CD4-positive, alpha-beta memory T cell (primary cell): ENCODE measurements at regions of chr1 and their contacts with region 1.

Region 1: DNA sequence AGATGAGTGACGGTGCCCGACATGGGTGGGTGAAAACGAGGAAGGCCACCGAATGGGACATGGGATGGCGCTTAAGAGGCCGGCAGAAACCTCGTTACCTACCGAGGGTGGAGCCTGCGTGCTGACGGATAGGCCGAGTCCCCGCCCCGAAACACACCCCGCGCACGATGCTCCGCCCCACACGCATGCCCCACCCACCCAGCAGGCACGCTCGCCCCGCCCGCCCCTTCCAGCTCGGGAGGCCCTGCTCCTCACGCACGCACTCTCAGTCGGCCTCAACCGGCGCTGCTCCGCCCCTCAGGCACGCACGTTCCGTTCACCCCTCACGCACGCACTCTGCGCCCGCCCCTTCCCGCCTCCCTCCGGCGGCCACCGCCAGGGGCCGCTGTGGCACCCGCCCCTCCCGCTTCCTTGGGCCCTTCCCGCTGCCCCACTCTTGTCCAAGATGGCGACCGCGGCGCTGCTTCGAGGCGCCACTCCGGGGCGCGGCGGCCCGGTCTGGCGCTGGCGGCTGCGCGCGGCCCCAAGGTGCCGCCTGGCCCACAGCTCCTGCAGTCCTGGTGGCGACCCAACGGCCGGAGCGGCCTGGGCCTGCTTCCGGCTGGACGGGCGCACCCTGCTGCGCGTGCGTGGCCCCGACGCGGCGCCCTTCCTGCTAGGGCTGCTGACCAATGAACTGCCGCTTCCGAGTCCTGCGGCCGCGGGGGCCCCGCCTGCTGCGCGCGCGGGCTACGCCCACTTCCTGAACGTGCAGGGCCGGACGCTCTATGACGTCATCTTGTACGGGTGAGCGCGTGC is at the start of gene IBA57:
- DNase-seq: peak; percentile 99 to 100 (median 100)
- H3K4me3 ChIP-seq: peak within 1 kb of the TSS; percentile 73 to 76
- H3K4me3 Mint-ChIP-seq: peak within 1 kb of the TSS; percentile 90 to 98 (median 92)
- H3K27ac ChIP-seq: peak within 1 kb of the TSS; percentile 96
- H3K27ac Mint-ChIP-seq: peak within 1 kb of the TSS; percentile 96 to 99 (median 98)
- H3K4me1 ChIP-seq: peaks cover 38% of the 10 kb centered on the region
- H3K4me1 Mint-ChIP-seq: peaks cover 22 to 70% (median 44%) of the 10 kb centered on the region in 4 donors
- H3K27me3 ChIP-seq: no peaks in the 10 kb centered on the region
- H3K27me3 Mint-ChIP-seq: no peaks in the 10 kb centered on the region
- total RNA-seq, gene IBA57: 10.9 to 12.0 TPM

Region 2: DNA sequence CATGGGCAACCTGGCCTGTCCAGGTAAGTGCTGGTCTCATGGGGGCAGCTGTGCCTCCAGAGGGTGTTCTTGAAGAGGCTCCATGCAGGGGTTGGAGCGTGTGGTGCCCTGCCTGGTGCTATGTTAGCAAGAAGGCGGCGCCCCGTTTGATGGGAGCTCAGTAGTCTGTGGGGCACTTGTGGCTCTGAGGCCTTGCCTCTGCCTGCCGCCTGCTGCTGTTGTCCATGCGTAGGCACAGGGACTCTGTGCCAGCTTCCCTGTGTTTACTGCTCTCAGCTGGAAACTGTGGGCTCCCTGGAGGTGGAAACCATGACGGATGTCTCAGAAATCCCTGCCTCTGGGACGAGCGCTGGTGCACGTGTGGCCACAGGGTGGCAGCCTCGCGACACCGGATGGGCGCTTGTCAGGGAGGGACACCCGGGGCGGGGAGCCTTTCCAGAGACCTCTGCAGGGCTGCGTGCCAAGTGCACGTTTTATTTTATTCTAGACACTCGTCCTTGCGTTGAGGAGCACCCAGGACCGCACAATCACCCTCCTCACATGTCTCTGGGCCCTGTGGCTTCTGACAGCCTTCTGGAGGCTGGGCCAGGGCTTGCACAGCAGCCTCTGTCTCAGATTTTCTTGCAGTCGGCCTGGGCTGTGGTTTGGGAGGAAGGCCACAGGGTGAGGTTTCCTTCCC is 403.2 kb before region 1 on chr1:
- CTCF ChIA-PET with region 1: no interaction called
- POLR2A ChIA-PET with region 1: interaction called, 3 read pairs
- intact Hi-C with region 1: loop called (anchors 10 kb)
- DNase-seq: peak; percentile 87 to 92 (median 88)
- H3K4me3 ChIP-seq: peak overlapping the region; percentile 20 to 41
- H3K4me3 Mint-ChIP-seq: peak overlapping the region; percentile 60 to 89 (median 76)
- H3K27ac ChIP-seq: peak overlapping the region; percentile 46
- H3K27ac Mint-ChIP-seq: peak overlapping the region; percentile 89 to 95 (median 92)
- H3K4me1 ChIP-seq: peaks cover 89% of the 10 kb centered on the region
- H3K4me1 Mint-ChIP-seq: peaks cover 66 to 97% (median 77%) of the 10 kb centered on the region in 4 donors
- H3K27me3 ChIP-seq: no peaks in the 10 kb centered on the region
- H3K27me3 Mint-ChIP-seq: no peaks in the 10 kb centered on the region

Region 3: DNA sequence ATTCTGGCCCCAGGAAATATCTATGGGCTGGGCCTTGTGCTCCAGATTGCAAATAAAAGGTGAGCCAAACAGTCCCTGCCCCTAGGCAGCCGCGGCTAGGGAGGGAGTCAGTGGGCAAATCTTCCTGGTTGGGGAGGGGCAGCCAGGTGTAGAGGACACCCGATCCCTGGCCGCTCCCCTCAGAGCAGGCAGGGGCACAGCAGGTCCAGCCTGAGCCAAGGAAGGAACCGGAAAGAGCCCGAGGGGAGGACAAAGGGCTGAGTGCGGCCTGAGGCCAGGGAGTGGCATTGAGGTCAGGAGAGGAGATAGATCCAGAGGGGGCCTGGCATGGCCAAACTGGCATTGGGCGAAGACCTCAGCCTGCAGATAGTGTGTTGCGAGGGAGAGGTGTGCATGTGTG is 119.7 kb before region 1 on chr1:
- CTCF ChIA-PET with region 1: no interaction called
- POLR2A ChIA-PET with region 1: no interaction called
- intact Hi-C with region 1: no loop called
- DNase-seq: no peak
- H3K4me3 ChIP-seq: no peak overlapping the region
- H3K4me3 Mint-ChIP-seq: no peak overlapping the region
- H3K27ac ChIP-seq: no peak overlapping the region
- H3K27ac Mint-ChIP-seq: no peak overlapping the region
- H3K4me1 ChIP-seq: no peaks in the 10 kb centered on the region
- H3K4me1 Mint-ChIP-seq: peaks cover 0 to 2% (median 0%) of the 10 kb centered on the region in 4 donors
- H3K27me3 ChIP-seq: no peaks in the 10 kb centered on the region
- H3K27me3 Mint-ChIP-seq: peaks cover 2 to 13% of the 10 kb centered on the region in 2 donors

Region 4: DNA sequence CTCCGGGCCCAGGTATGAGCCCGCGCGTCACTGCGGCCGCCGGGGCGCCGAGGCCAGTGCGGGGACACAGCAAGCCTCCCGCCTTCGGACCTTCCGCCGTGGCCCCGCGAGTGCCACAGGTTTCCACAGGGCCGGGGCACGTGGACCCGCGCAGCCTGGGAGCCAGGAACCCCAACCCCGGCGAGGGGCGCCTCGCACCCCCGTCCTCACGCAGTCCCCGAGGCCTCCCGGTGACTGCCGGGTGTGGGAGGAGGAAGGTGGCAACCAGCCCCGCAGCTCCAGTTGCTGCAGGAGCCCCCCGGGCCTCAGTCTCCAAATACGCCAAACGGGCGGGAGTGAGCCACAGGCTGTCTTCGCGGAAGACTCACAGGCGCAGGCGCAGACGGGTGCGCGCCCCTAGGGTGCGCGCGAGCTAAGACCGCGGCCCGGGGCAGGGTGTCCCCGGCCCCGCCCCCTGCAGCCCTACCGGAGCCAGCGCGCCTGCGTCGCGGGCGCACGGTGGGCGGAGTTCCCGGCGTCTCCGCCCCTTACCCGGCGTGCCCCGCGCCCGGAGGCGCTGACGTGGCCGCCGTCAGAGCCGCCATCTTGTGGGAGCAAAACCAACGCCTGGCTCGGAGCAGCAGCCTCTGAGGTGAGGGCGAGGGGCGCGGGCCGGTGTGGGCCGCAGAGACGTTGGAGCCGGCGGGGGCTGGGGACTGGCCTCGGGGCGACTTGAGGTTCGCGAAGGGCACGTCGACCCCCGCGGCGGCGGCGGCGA is 83.3 kb before region 1 on chr1 and contains the start of gene ARF1:
- CTCF ChIA-PET with region 1: interaction called, 4 read pairs
- POLR2A ChIA-PET with region 1: interaction called, 34 read pairs
- intact Hi-C with region 1: loop called (anchors 1 kb)
- DNase-seq: peak; percentile 88 to 97 (median 95)
- H3K4me3 ChIP-seq: peak within 1 kb of the TSS; percentile 80 to 97
- H3K4me3 Mint-ChIP-seq: peak within 1 kb of the TSS; percentile 90 to 96 (median 94)
- H3K27ac ChIP-seq: peak within 1 kb of the TSS; percentile 97
- H3K27ac Mint-ChIP-seq: peak within 1 kb of the TSS; percentile 95 to 99 (median 97)
- H3K4me1 ChIP-seq: peaks cover 53% of the 10 kb centered on the region
- H3K4me1 Mint-ChIP-seq: peaks cover 35 to 56% (median 45%) of the 10 kb centered on the region in 4 donors
- H3K27me3 ChIP-seq: no peaks in the 10 kb centered on the region
- H3K27me3 Mint-ChIP-seq: no peaks in the 10 kb centered on the region
- total RNA-seq, gene ARF1: 265 to 270 TPM

Region 5: DNA sequence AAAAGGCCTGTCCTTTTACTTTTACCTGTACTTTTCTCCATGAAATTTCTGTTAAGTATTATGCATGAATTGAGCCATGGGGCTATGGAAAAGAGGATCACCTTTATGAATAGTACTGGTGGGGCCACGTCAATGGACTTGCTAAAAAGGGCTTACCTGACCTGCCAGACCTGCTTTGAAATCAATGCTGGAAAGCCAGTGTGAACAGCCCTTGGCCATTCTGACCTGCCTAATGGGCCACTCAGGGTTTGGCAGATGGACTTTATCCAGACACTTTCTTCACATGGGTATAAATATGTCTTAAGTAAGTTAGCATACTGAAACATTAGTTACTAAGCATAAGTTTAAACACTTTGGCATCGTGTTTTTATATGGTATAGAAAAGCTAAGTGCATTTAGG is 33.8 kb before region 1 on chr1:
- CTCF ChIA-PET with region 1: interaction called, 66 read pairs
- POLR2A ChIA-PET with region 1: interaction called, 24 read pairs
- intact Hi-C with region 1: loop called (anchors 1 kb)
- DNase-seq: no peak
- H3K4me3 ChIP-seq: no peak overlapping the region
- H3K4me3 Mint-ChIP-seq: no peak overlapping the region
- H3K27ac ChIP-seq: no peak overlapping the region
- H3K27ac Mint-ChIP-seq: no peak overlapping the region
- H3K4me1 ChIP-seq: peaks cover 5% of the 10 kb centered on the region
- H3K4me1 Mint-ChIP-seq: peaks cover 2 to 5% (median 4%) of the 10 kb centered on the region in 4 donors
- H3K27me3 ChIP-seq: no peaks in the 10 kb centered on the region
- H3K27me3 Mint-ChIP-seq: peaks cover 8 to 14% of the 10 kb centered on the region in 2 donors

Region 6: DNA sequence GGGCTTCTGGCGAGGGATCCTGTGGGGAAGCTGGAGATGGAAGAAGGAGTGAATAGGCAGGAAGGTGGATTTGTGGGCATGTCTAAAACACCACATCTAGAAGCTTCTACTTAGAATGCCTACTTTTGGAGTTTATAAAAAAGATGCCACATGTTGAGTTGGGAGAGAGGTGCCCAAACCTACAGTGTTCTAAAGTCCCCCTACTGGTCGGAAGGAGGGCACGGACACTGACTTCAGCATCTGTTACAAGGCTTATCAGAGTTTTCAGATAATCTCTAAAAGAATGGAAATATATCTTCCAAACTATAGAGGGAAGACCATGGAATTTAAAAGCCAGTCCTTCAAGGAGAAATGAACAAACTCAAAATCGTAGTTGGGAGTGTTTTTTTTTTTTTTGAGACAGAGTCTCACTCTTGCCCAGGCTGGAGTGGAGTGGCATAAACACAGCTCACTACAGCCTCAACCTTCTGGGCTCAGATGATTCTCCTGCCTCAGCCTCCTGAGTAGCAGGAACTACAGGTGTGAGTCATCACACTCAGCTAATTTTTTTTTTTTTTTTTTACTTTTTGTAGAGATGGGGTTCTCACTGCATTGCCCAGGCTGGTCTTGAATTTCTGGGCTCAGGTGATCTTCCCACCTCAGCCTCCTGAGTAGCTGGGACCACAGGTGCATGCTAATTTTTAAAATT is 14.8 kb after region 1 on chr1:
- CTCF ChIA-PET with region 1: interaction called, 17 read pairs
- POLR2A ChIA-PET with region 1: interaction called, 26 read pairs
- intact Hi-C with region 1: loop called (anchors 1 kb)
- DNase-seq: no peak
- H3K4me3 ChIP-seq: no peak overlapping the region
- H3K4me3 Mint-ChIP-seq: no peak overlapping the region
- H3K27ac ChIP-seq: no peak overlapping the region
- H3K27ac Mint-ChIP-seq: peak overlapping the region in 4 of 7 donors; percentile 36 to 56 (median 52)
- H3K4me1 ChIP-seq: peaks cover 5% of the 10 kb centered on the region
- H3K4me1 Mint-ChIP-seq: peaks cover 4 to 9% (median 5%) of the 10 kb centered on the region in 4 donors
- H3K27me3 ChIP-seq: no peaks in the 10 kb centered on the region
- H3K27me3 Mint-ChIP-seq: no peaks in the 10 kb centered on the region

Region 7: DNA sequence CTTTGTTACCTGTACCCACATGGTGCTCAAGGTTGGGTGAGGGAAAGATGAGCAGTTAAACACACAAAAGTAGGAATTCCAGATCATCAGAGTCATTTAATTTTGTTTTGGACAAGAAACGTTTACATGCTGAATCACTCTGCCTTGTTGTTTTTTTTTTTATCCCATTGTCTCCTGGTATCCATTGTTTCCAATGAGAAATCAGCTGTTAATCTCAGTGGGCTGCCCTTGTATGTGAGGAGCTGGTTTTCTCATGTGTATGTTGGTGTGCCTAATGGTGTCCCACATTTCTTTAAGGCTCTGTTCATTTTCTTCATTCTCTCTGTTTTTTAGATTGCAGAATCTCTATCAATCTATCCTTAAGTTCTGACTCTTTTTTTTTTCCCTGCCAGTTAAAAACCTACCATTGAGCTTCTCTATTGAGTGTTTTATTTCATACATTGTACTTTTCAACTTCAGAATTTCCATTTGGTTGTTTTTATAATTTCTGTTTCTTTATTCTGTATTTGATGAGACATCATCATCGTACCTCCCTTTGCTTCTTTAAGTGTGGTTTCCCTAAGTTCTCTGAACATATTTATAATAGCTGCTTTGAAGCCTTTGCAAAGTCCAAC is 33.5 kb after region 1 on chr1:
- CTCF ChIA-PET with region 1: no interaction called
- POLR2A ChIA-PET with region 1: no interaction called
- intact Hi-C with region 1: no loop called
- DNase-seq: no peak
- H3K4me3 ChIP-seq: no peak overlapping the region
- H3K4me3 Mint-ChIP-seq: peak overlapping the region in 1 of 8 donors; percentile 22
- H3K27ac ChIP-seq: no peak overlapping the region
- H3K27ac Mint-ChIP-seq: peak overlapping the region in 2 of 7 donors; percentile 25 to 54
- H3K4me1 ChIP-seq: no peaks in the 10 kb centered on the region
- H3K4me1 Mint-ChIP-seq: no peaks in the 10 kb centered on the region
- H3K27me3 ChIP-seq: no peaks in the 10 kb centered on the region
- H3K27me3 Mint-ChIP-seq: peaks cover 0 to 2% of the 10 kb centered on the region in 2 donors

Region 8: DNA sequence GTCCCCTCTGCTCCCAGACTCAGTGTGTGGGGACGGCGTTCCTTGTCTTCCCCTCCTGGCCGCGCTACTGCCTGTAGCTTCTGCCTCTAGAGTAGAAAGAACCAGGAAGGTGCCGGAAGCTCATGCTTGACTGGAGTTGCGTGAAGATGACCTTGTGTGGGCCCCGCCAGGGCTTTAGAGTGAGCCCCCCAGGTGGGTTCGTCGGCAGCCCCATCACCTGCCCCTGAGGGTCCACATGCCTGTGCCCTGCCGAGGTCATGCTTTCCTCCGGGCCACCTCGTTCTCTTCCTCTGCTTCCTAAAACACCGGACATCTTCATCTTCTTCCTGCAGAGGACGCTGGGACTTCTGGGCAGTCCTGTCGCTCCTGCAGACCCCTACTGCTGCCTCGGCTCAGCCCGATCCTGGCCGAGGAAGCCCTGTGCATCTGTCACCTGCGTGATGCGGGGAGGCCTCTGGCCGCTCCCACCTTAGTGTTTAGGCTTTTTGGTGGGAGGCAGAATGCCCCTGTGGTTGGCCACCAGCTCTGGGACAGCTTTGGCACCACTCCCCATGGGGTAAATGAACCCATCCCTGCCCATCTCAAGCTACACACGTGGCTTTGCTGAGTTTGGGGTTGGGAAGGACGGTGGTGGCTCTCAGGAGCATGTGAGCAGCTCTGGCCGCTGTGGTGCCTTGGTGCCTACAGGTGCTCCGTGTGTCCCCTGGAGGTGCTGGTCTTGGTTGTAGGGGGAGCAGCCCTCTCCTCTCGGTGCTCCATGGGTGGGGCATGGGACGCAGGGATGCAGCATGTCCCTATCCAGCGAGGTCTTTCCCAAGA is 54.6 kb after region 1 on chr1:
- CTCF ChIA-PET with region 1: no interaction called
- POLR2A ChIA-PET with region 1: no interaction called
- intact Hi-C with region 1: no loop called
- DNase-seq: no peak
- H3K4me3 ChIP-seq: no peak overlapping the region
- H3K4me3 Mint-ChIP-seq: peak overlapping the region in 1 of 8 donors; percentile 64
- H3K27ac ChIP-seq: no peak overlapping the region
- H3K27ac Mint-ChIP-seq: no peak overlapping the region
- H3K4me1 ChIP-seq: no peaks in the 10 kb centered on the region
- H3K4me1 Mint-ChIP-seq: peaks cover 0 to 4% (median 2%) of the 10 kb centered on the region in 4 donors
- H3K27me3 ChIP-seq: no peaks in the 10 kb centered on the region
- H3K27me3 Mint-ChIP-seq: no peaks in the 10 kb centered on the region

Region 9: DNA sequence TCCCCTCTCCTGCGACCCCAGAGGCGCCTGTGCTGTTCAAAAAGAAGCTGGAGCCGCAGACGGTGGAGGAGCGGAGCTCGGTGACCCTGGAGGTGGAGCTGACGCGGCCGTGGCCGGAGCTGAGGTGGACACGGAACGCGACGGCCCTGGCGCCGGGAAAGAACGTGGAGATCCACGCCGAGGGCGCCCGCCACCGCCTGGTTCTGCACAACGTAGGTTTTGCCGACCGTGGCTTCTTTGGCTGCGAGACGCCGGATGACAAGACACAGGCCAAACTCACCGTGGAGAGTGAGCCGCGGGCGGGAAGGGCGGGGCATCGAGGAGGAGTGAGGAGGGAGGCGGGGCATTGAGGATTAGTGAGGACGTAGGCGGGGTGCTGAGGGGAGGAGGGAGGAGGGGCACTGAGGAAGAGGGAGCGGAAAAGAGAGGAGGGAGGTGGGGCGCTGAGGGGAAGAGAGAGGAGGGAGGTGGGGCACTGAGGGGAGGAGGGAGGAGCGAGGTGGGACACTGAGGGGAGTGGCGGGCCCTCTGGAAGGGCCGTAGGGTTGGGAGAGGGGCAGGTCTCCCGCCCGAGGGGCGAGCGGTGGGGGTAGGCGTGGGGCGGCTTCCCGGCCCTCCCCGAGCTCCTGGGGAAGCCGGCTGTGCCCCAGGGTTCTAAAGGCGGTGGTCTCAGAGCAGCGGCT is 110.3 kb after region 1 on chr1:
- CTCF ChIA-PET with region 1: interaction called, 5 read pairs
- POLR2A ChIA-PET with region 1: interaction called, 23 read pairs
- intact Hi-C with region 1: loop called (anchors 1 kb)
- DNase-seq: peak; percentile 83 to 90 (median 85)
- H3K4me3 ChIP-seq: peak overlapping the region; percentile 36 to 62
- H3K4me3 Mint-ChIP-seq: peak overlapping the region; percentile 79 to 86 (median 82)
- H3K27ac ChIP-seq: peak overlapping the region; percentile 53
- H3K27ac Mint-ChIP-seq: peak overlapping the region; percentile 41 to 86 (median 60)
- H3K4me1 ChIP-seq: peaks cover 8% of the 10 kb centered on the region
- H3K4me1 Mint-ChIP-seq: peaks cover 4 to 19% (median 11%) of the 10 kb centered on the region in 4 donors
- H3K27me3 ChIP-seq: no peaks in the 10 kb centered on the region
- H3K27me3 Mint-ChIP-seq: no peaks in the 10 kb centered on the region

Region 10: GRCh38 chr1:228486596-228487335 is 321.2 kb after region 1 on chr1:
- CTCF ChIA-PET with region 1: no interaction called
- POLR2A ChIA-PET with region 1: interaction called, 7 read pairs
- intact Hi-C with region 1: loop called (anchors 2 kb)
- DNase-seq: peak; percentile 83 to 90 (median 87)
- H3K4me3 ChIP-seq: peak overlapping the region; percentile 89 to 100
- H3K4me3 Mint-ChIP-seq: peak overlapping the region; percentile 88 to 98 (median 94)
- H3K27ac ChIP-seq: peak overlapping the region; percentile 99
- H3K27ac Mint-ChIP-seq: peak overlapping the region; percentile 99 to 100 (median 100)
- H3K4me1 ChIP-seq: peaks cover 32% of the 10 kb centered on the region
- H3K4me1 Mint-ChIP-seq: peaks cover 11 to 44% (median 30%) of the 10 kb centered on the region in 4 donors
- H3K27me3 ChIP-seq: no peaks in the 10 kb centered on the region
- H3K27me3 Mint-ChIP-seq: no peaks in the 10 kb centered on the region